ENCODE measurements at regions of chr11 and their contacts with region 1.

Region 1: DNA sequence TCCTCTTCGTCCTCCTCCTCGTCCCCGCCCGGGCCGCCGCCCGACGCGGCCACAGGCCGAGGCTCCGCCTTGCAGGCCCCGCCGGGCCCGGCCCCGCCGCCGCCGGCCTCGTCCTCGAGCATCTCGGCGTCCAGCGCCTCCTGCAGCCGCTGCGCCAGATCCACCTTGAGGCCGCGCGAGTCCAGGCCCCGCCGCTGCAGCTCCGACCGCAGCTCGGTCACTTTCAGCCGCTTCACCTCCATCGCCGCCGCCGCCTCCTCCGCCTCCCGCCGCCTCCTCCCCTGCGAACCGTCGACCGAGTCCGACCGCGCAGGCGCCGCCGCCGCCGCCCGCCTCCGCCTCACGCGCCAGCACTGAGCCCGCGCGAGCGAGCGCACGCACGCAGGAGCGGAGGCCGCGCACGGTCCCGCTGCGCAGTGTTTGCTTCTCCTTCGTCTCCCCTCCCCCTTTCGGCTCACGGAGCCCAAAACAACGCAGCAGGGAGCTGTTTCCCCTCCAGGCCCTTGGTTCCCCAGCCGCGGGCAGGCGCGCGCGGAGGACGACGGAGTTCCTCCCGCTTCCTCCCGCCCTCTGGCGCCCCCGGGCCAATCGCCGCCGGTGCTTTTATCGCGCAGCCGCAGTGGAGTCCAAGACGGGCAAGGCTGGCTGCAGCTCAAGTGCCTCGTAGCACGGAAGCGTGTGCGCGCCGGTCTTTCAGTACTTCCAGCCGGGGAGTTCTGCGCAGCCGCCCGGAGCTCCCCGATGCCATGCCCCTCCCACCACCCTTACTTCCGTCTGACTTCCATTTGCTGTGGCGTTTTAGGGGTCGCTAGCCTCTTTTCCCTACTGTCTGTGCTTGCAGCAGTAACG is at the start of gene HNRNPUL2:
- DNase-seq: peak; percentile 99
- H3K4me3 ChIP-seq: peak within 1 kb of the TSS; percentile 84 to 98 (median 94)
- H3K27ac ChIP-seq: peak within 1 kb of the TSS; percentile 96 to 97 (median 96)
- H3K4me1 ChIP-seq: peaks cover 0 to 60% (median 55%) of the 10 kb centered on the region in 4 donors
- H3K27me3 ChIP-seq: no peaks in the 10 kb centered on the region
- CTCF ChIP-seq: no peak
- EP300 ChIP-seq: no peak
- POLR2A ChIP-seq: peak; percentile 87 to 96
- total RNA-seq, gene HNRNPUL2: 22.9 to 30.7 (median 25.3) TPM

Region 2: DNA sequence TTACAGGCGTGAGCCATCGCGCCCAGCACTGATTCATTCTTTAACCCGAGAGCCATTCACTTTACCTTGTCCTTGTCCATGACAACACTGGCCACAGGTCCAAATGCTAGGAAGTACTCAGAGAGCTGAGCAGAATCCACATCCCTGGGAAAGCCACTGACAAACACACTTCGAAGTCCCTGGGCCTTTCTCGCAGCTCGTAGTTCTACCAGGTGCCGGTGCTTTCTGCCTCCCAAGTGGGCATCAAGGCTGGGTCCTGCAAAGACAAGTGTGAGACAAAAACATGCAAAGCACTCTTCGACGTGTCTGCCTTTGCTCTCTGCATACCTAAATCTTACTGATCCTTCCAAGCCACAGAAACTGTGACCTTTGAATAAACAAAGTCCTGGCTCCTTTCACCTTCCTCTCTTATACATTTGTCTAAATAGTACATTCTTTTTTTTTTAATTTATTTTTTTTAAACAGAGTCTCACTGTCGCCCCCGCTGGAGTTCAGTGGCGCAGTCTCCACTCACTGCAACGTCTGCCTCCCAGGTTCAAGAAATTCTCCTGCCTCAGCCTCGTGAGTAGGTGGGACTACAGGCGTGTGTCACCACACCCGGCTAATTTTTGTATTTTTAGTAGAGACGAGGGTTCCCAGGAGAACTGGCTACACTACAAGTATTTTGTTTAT is 138.0 kb before region 1 on chr11:
- intact Hi-C with region 1: no loop called
- DNase-seq: no peak
- H3K4me3 ChIP-seq: no peak overlapping the region
- H3K27ac ChIP-seq: no peak overlapping the region
- H3K4me1 ChIP-seq: peaks cover 0 to 33% (median 28%) of the 10 kb centered on the region in 4 donors
- H3K27me3 ChIP-seq: no peaks in the 10 kb centered on the region
- CTCF ChIP-seq: no peak
- EP300 ChIP-seq: no peak
- POLR2A ChIP-seq: no peak

Region 3: GRCh38 chr11:62621567-62622470 is 105.3 kb before region 1 on chr11 and contains the start of gene B3GAT3:
- intact Hi-C with region 1: loop called (anchors 5 kb)
- DNase-seq: peak; percentile 99
- H3K4me3 ChIP-seq: peak within 1 kb of the TSS; percentile 60 to 87 (median 74)
- H3K27ac ChIP-seq: peak within 1 kb of the TSS; percentile 84 to 93 (median 90)
- H3K4me1 ChIP-seq: peaks cover 0 to 23% (median 19%) of the 10 kb centered on the region in 4 donors
- H3K27me3 ChIP-seq: no peaks in the 10 kb centered on the region
- CTCF ChIP-seq: no peak
- EP300 ChIP-seq: peak in 2 of 4 donors; percentile 53 to 88
- POLR2A ChIP-seq: peak; percentile 76
- total RNA-seq, gene B3GAT3: 11.1 to 26.3 (median 16.8) TPM

Region 4: GRCh38 chr11:62753736-62754603 is 26.8 kb after region 1 on chr11 and contains the start of gene ZBTB3:
- intact Hi-C with region 1: loop called (anchors 2 kb)
- DNase-seq: peak; percentile 99
- H3K4me3 ChIP-seq: peak within 1 kb of the TSS; percentile 50 to 70 (median 66)
- H3K27ac ChIP-seq: peak within 1 kb of the TSS; percentile 90 to 96 (median 94)
- H3K4me1 ChIP-seq: peaks cover 0 to 38% (median 18%) of the 10 kb centered on the region in 4 donors
- H3K27me3 ChIP-seq: no peaks in the 10 kb centered on the region
- CTCF ChIP-seq: peak in 1 of 4 experiments; percentile 9
- EP300 ChIP-seq: no peak
- POLR2A ChIP-seq: peak; percentile 76 to 87
- total RNA-seq, gene ZBTB3: 6.6 to 12.1 (median 7.7) TPM

Region 5: DNA sequence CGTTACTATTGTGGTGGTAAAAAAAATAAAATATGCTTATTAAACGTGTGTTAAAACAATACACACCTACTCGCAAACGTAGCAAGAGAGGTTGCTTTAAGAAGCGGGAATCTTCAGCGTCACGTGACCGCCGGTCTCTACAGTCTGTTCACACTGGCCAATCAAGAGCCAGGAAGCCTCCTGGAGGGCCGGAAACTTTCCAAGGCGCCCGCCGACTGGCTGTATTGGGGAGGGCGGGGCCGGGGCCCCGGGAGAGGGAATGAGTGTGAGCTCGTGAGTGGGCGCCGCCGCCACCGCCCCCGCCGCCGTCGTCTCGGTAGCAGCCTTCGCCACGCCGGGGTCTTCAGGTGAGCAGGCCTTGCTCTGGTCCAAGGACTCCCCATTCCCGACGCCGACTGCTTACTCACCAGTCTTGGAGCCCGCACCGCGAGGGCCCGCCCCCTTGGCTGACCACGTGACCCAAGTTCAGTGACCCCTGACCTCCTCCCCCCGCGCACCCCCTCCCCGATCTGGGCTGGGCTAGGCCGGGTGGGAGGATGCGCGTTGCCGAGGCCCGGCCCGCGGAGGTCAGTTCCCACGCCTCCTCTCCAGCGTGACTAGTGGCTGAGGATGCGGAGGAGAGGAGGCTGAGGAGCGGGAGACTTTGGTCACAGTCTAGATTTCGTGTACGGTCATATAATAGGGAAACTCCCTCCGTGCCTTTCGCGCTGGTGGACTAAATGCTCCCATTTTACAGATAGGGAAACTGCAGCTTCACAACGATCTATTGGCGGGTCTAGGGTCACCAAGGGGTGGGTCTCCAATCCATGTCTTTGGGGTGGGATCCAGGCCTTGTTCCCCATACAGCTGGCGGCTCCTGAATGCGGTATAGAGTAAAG is 44.2 kb after region 1 on chr11 and contains the start of gene TAF6L:
- intact Hi-C with region 1: loop called (anchors 5 kb)
- DNase-seq: peak; percentile 100
- H3K4me3 ChIP-seq: peak within 1 kb of the TSS; percentile 62 to 73 (median 68)
- H3K27ac ChIP-seq: peak within 1 kb of the TSS; percentile 91 to 96 (median 94)
- H3K4me1 ChIP-seq: peaks cover 0 to 28% (median 22%) of the 10 kb centered on the region in 4 donors
- H3K27me3 ChIP-seq: no peaks in the 10 kb centered on the region
- CTCF ChIP-seq: no peak
- EP300 ChIP-seq: peak in 1 of 4 donors; percentile 10
- POLR2A ChIP-seq: peak; percentile 31 to 42
- total RNA-seq, gene TAF6L: 13.2 to 20.1 (median 16.7) TPM

Region 6: GRCh38 chr11:62831520-62832335 is 104.6 kb after region 1 on chr11 and contains the start of gene STX5:
- intact Hi-C with region 1: loop called (anchors 5 kb)
- DNase-seq: peak; percentile 100
- H3K4me3 ChIP-seq: peak within 1 kb of the TSS; percentile 77 to 90 (median 84)
- H3K27ac ChIP-seq: peak within 1 kb of the TSS; percentile 95 to 99 (median 96)
- H3K4me1 ChIP-seq: peaks cover 0 to 51% (median 45%) of the 10 kb centered on the region in 4 donors
- H3K27me3 ChIP-seq: no peaks in the 10 kb centered on the region
- CTCF ChIP-seq: no peak
- EP300 ChIP-seq: no peak
- POLR2A ChIP-seq: peak; percentile 87 to 90
- total RNA-seq, gene STX5: 27.1 to 37.8 (median 31.2) TPM

Measured in sigmoid colon (tissue), 7 donors.